ENCODE measurements at regions of chr16 and their contacts with region 1.

Region 1: DNA sequence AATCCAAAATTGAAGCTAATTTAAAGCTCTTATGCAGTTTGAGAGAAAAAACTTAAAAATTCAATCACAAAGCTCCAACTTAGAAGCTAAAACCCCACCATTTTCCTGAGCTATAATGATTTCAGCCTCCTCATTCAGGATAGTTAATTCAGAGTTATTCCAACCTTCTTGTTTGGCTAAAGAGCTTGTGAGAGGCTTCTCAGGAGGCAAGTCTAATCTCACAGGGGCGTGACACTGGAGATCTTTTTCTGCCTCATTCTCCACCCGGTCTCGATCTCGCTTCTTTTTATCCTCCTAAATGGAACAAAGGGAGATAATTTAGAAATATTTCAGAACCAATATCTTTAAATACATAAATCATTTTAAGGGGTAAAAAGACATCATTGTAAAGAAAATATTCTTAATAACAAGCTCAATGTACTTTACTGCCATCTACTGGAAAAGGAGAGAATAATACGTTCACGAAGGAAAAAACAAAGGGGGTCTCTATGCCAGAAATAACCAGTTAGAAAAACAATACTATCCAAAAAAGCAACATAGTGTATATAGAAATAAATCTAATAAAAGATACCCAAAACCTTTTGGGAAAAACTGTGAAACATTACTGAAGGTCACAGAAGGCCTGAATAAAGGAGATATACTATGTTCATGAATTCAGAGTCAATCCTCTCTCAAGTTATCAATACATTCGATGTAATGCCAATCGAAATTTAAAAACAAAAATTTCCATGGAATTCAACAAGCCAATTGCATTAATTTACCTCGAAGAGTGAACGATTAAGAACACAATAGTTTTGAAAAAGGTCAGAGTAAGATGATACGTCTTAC is 13.9 kb downstream of the BRD7 start:
- DNase-seq: no peak
- ATAC-seq: no peak
- H3K4me3 Mint-ChIP-seq: no peak overlapping the region
- H3K27ac Mint-ChIP-seq: peak overlapping the region; percentile 13
- H3K4me1 Mint-ChIP-seq: peaks cover 23% of the 10 kb centered on the region
- H3K27me3 Mint-ChIP-seq: no peaks in the 10 kb centered on the region
- CTCF ChIP-seq: peak; percentile 92

Region 2: GRCh38 chr16:50202926-50203624 is 151.8 kb before region 1 on chr16:
- CTCF ChIA-PET with region 1: interaction called, 76 read pairs
- POLR2A ChIA-PET with region 1: no interaction called
- intact Hi-C with region 1: no loop called
- DNase-seq: no peak
- ATAC-seq: no peak
- H3K4me3 Mint-ChIP-seq: no peak overlapping the region
- H3K27ac Mint-ChIP-seq: peak overlapping the region; percentile 18
- H3K4me1 Mint-ChIP-seq: peaks cover 59% of the 10 kb centered on the region
- H3K27me3 Mint-ChIP-seq: no peaks in the 10 kb centered on the region
- CTCF ChIP-seq: no peak

Region 3: GRCh38 chr16:50245417-50246298 is 109.2 kb before region 1 on chr16:
- CTCF ChIA-PET with region 1: interaction called, 12 read pairs
- POLR2A ChIA-PET with region 1: no interaction called
- intact Hi-C with region 1: no loop called
- DNase-seq: peak; percentile 92
- ATAC-seq: peak; percentile 94
- H3K4me3 Mint-ChIP-seq: peak overlapping the region; percentile 79
- H3K27ac Mint-ChIP-seq: peak overlapping the region; percentile 86
- H3K4me1 Mint-ChIP-seq: peaks cover 13% of the 10 kb centered on the region
- H3K27me3 Mint-ChIP-seq: no peaks in the 10 kb centered on the region
- CTCF ChIP-seq: peak; percentile 36

Region 4: DNA sequence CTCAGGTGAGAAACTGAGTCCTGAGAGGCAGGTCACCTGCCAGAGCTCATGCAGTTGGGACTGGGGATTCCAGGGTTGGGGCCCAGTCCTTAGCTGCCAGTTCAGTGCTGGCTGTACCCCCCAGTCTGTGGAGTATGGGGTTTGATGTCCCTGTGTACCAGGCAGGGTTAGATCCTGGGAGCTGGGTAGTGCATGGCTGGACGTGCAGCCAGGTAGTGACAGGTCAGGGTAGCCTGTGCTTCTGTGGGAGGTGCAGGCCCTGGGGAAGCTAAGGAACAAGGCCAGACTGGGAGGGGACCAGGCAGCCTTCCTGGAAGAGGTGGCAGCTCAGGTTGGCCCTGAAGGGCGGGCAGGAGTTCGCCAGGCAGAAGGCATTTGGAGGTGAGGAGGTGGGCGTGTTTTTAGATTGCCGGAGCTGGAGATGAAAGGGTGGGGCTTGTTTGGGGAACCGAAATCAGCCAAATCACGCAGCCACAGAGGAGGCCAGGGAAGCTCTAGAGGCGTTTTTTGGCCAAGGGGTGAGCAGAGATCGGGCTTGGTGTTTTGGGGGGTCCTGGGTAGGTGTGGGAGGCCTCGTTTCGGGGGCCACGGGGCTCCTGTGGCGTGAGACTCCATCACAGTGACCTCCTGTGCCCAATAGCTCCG is 81.0 kb before region 1 on chr16:
- CTCF ChIA-PET with region 1: interaction called, 25 read pairs
- POLR2A ChIA-PET with region 1: no interaction called
- intact Hi-C with region 1: no loop called
- DNase-seq: peak; percentile 68
- ATAC-seq: peak; percentile 28
- H3K4me3 Mint-ChIP-seq: peak overlapping the region; percentile 93
- H3K27ac Mint-ChIP-seq: peak overlapping the region; percentile 100
- H3K4me1 Mint-ChIP-seq: peaks cover 94% of the 10 kb centered on the region
- H3K27me3 Mint-ChIP-seq: no peaks in the 10 kb centered on the region
- CTCF ChIP-seq: no peak

Region 5: GRCh38 chr16:50313596-50314478 is 41.0 kb before region 1 on chr16:
- CTCF ChIA-PET with region 1: interaction called, 20 read pairs
- POLR2A ChIA-PET with region 1: interaction called, 3 read pairs
- intact Hi-C with region 1: no loop called
- DNase-seq: peak; percentile 66
- ATAC-seq: peak; percentile 79
- H3K4me3 Mint-ChIP-seq: no peak overlapping the region
- H3K27ac Mint-ChIP-seq: peak overlapping the region; percentile 91
- H3K4me1 Mint-ChIP-seq: peaks cover 23% of the 10 kb centered on the region
- H3K27me3 Mint-ChIP-seq: no peaks in the 10 kb centered on the region
- CTCF ChIP-seq: no peak

Region 6: GRCh38 chr16:50335196-50335958 is 19.5 kb before region 1 on chr16:
- CTCF ChIA-PET with region 1: interaction called, 266 read pairs
- POLR2A ChIA-PET with region 1: interaction called, 4 read pairs
- intact Hi-C with region 1: no loop called
- DNase-seq: peak; percentile 77
- ATAC-seq: peak; percentile 71
- H3K4me3 Mint-ChIP-seq: peak overlapping the region; percentile 64
- H3K27ac Mint-ChIP-seq: peak overlapping the region; percentile 98
- H3K4me1 Mint-ChIP-seq: peaks cover 56% of the 10 kb centered on the region
- H3K27me3 Mint-ChIP-seq: no peaks in the 10 kb centered on the region
- CTCF ChIP-seq: no peak

Region 7: DNA sequence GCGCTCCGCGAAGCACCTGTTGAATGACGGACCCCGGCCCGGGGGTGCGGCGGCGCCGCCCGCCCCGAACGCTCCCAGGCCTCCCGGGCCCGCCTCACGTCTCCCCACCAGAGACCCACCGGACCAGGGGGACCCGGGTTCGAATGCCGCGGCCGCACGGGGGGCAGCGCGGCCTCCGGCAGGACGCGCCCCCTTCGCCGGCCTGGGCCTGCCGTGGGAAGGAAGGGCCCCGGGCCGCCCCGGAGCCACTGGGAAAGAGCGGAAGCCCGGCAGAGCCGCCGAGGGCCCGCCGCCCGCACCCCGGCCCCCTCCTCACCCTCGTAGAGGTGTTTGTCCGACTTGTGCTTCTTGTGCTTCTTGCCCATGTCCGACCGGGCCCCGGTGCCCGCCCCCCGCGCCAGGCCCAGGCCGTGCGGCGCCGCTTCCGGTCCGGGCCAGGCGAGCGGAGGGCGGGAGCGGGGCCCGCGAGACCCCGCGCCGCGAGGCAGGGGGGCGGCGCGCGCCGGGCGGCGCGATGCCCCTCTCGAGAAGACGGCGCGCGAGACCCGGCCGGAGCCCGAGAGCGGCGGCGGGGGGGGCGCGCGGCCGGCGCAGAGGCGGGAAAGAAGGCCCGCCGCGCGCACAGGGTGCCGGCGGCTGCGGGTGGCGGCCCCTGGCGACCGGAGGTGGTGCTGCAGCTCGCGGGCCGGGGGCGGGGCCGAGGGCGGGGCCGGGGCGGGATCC is 13.7 kb after region 1 on chr16 and contains the start of gene BRD7:
- CTCF ChIA-PET with region 1: interaction called, 118 read pairs
- POLR2A ChIA-PET with region 1: interaction called, 3 read pairs
- intact Hi-C with region 1: no loop called
- DNase-seq: peak; percentile 65
- ATAC-seq: peak; percentile 91
- H3K4me3 Mint-ChIP-seq: peak within 1 kb of the TSS; percentile 93
- H3K27ac Mint-ChIP-seq: peak within 1 kb of the TSS; percentile 92
- H3K4me1 Mint-ChIP-seq: peaks cover 36% of the 10 kb centered on the region
- H3K27me3 Mint-ChIP-seq: no peaks in the 10 kb centered on the region
- CTCF ChIP-seq: no peak
- total RNA-seq, gene BRD7: 76.2 to 93.4 TPM

Region 8: GRCh38 chr16:50448501-50448900 is 93.7 kb after region 1 on chr16:
- CTCF ChIA-PET with region 1: no interaction called
- POLR2A ChIA-PET with region 1: no interaction called
- intact Hi-C with region 1: no loop called
- DNase-seq: no peak
- ATAC-seq: no peak
- H3K4me3 Mint-ChIP-seq: no peak overlapping the region
- H3K27ac Mint-ChIP-seq: no peak overlapping the region
- H3K4me1 Mint-ChIP-seq: no peaks in the 10 kb centered on the region
- H3K27me3 Mint-ChIP-seq: no peaks in the 10 kb centered on the region
- CTCF ChIP-seq: no peak

Measured in activated CD8-positive, alpha-beta T cell treated with anti-CD3 and anti-CD28 coated beads for 36 hours (primary cell).